B cell (primary cell): ENCODE measurements at regions of chr12 and their contacts with region 1.

Region 1: GRCh38 chr12:121600702-121601336 is 20.0 kb upstream of the KDM2B start:
- DNase-seq: no peak
- ATAC-seq: no peak
- H3K4me3 ChIP-seq: no peak overlapping the region
- H3K4me3 Mint-ChIP-seq: no peak overlapping the region
- H3K27ac ChIP-seq: no peak overlapping the region
- H3K27ac Mint-ChIP-seq: no peak overlapping the region
- H3K4me1 ChIP-seq: no peaks in the 10 kb centered on the region
- H3K4me1 Mint-ChIP-seq: no peaks in the 10 kb centered on the region
- H3K27me3 ChIP-seq: no peaks in the 10 kb centered on the region
- H3K27me3 Mint-ChIP-seq: no peaks in the 10 kb centered on the region
- CTCF ChIP-seq: no peak

Region 2: DNA sequence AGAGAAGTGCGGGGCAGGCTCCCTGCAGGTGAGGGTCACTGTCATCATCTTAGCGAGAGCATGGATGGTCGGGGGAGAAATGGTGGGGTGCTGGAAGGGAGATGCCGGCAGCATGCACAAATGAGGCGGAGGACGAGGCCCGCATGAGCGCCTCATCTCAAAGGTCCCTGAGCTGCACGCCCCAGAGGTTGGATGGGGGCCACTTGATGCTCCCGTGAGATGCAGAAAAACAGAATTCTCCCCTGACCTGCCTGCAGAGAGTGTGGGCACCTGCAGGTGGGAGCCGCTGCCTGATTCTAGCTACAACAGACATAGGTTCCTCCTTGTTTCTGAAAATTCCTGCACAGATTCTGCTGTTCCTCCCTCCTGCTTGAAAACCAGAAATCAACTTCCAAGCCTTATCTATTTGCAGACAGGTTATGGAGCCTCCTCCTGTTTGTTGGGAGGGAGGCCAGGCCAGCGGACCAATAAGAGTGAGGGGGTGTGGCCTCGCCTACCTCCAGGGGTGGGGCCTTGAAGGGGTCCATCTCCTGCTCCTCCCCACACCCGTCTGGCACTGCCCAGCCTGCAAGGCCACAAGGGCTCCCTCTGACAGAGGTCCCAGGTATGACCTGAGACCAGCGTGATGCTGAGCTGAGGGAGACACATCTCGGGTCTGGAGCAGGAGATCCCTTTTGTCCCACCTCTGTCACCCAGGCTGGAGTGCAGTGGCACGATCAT is 87.2 kb before region 1 on chr12:
- CTCF ChIA-PET with region 1: no interaction called
- POLR2A ChIA-PET with region 1: interaction called, 12 read pairs
- intact Hi-C with region 1: no loop called
- DNase-seq: no peak
- ATAC-seq: peak; percentile 63
- H3K4me3 ChIP-seq: peak overlapping the region in 4 of 5 experiments; percentile 24 to 49 (median 37)
- H3K4me3 Mint-ChIP-seq: peak overlapping the region; percentile 64
- H3K27ac ChIP-seq: peak overlapping the region; percentile 94
- H3K27ac Mint-ChIP-seq: peak overlapping the region; percentile 91
- H3K4me1 ChIP-seq: peaks cover 14 to 20% of the 10 kb centered on the region in 2 donors
- H3K4me1 Mint-ChIP-seq: peaks cover 20% of the 10 kb centered on the region
- H3K27me3 ChIP-seq: no peaks in the 10 kb centered on the region
- H3K27me3 Mint-ChIP-seq: no peaks in the 10 kb centered on the region
- CTCF ChIP-seq: no peak

Region 3: DNA sequence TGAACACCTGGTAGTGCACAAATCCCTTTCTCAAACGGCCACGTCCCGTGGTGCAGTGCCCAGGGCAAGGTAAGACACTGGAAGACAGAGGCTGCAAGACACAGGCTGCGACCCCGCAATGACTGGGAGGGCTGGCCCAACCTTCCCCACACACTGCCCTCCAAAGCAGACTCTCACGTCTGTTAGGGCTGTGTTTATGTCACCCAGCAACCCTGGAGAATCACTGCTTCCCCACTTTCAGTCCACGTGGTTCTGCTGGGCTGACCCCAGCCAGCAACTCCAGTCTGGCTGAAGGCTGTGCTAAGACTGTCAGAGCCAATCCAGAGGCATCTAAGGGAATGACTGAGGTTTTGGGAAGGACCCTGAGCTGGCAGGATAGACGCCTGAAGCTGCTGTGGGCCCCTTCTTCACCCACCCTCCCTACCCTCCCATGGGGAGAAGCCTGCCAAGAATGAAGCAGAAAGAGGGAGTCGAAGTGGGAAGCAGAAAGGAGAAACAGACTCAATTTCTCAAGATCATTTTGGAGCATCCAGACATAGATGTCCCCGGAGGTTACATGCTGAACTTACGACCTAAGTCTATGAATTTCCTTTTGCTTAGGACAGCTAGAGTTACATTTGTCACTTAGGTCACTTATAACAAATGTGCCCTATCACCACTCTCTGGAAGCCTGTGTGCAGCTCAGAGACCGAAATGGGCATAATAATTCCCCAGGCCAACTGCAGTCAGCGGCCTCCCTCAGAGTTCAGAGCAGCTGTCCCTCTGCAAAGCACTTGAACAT is 31.7 kb before region 1 on chr12:
- CTCF ChIA-PET with region 1: interaction called, 3 read pairs
- POLR2A ChIA-PET with region 1: interaction called, 10 read pairs
- intact Hi-C with region 1: no loop called
- DNase-seq: no peak
- ATAC-seq: no peak
- H3K4me3 ChIP-seq: no peak overlapping the region
- H3K4me3 Mint-ChIP-seq: no peak overlapping the region
- H3K27ac ChIP-seq: no peak overlapping the region
- H3K27ac Mint-ChIP-seq: peak overlapping the region; percentile 10
- H3K4me1 ChIP-seq: no peaks in the 10 kb centered on the region
- H3K4me1 Mint-ChIP-seq: peaks cover 4% of the 10 kb centered on the region
- H3K27me3 ChIP-seq: no peaks in the 10 kb centered on the region
- H3K27me3 Mint-ChIP-seq: no peaks in the 10 kb centered on the region
- CTCF ChIP-seq: no peak